ENCODE measurements at regions of chr6 and their contacts with region 1.

Region 1: GRCh38 chr6:90285611-90286381 is 10.8 kb downstream of the BACH2 start:
- DNase-seq: peak; percentile 94 to 97
- ATAC-seq: peak; percentile 89 to 96
- H3K4me3 ChIP-seq: peak overlapping the region; percentile 27 to 49 (median 43)
- H3K27ac ChIP-seq: peak overlapping the region; percentile 75 to 92 (median 84)
- H3K4me1 ChIP-seq: peaks cover 60 to 66% of the 10 kb centered on the region in 2 donors
- H3K27me3 ChIP-seq: no peaks in the 10 kb centered on the region
- CTCF ChIP-seq: no peak
- POLR2A ChIP-seq: peak in 1 of 2 donors; percentile 18

Region 2: GRCh38 chr6:89412071-89413005 is 873.5 kb before region 1 on chr6 and contains the start of gene RRAGD:
- in situ Hi-C with region 1: no loop called
- intact Hi-C with region 1: loop called (anchors 5 kb)
- DNase-seq: peak; percentile 82 to 91
- ATAC-seq: peak; percentile 85 to 91
- H3K4me3 ChIP-seq: peak within 1 kb of the TSS; percentile 89 to 97 (median 93)
- H3K27ac ChIP-seq: peak within 1 kb of the TSS; percentile 98 to 99 (median 99)
- H3K4me1 ChIP-seq: peaks cover 36 to 37% of the 10 kb centered on the region in 2 donors
- H3K27me3 ChIP-seq: no peaks in the 10 kb centered on the region
- CTCF ChIP-seq: peak in 3 of 5 experiments; percentile 20 to 47 (median 22)
- POLR2A ChIP-seq: peak; percentile 93 to 95
- total RNA-seq, gene RRAGD: 53.6 to 173 (median 106) TPM

Region 3: GRCh38 chr6:89970609-89971337 is 315.0 kb before region 1 on chr6:
- in situ Hi-C with region 1: loop called in 2 of 4 experiments (anchors 10 to 25 kb)
- intact Hi-C with region 1: no loop called
- DNase-seq: no peak
- ATAC-seq: peak; percentile 59 to 75
- H3K4me3 ChIP-seq: no peak overlapping the region
- H3K27ac ChIP-seq: peak overlapping the region in 1 of 4 donors; percentile 64
- H3K4me1 ChIP-seq: peaks cover 30 to 36% of the 10 kb centered on the region in 2 donors
- H3K27me3 ChIP-seq: no peaks in the 10 kb centered on the region
- CTCF ChIP-seq: peak; percentile 26 to 64 (median 44)
- POLR2A ChIP-seq: no peak

Region 4: GRCh38 chr6:90025523-90026061 is 260.2 kb before region 1 on chr6:
- in situ Hi-C with region 1: no loop called
- intact Hi-C with region 1: no loop called
- DNase-seq: peak in 1 of 2 donors; percentile 27
- ATAC-seq: peak; percentile 98 to 100
- H3K4me3 ChIP-seq: no peak overlapping the region
- H3K27ac ChIP-seq: peak overlapping the region; percentile 45 to 64 (median 54)
- H3K4me1 ChIP-seq: peaks cover 29 to 31% of the 10 kb centered on the region in 2 donors
- H3K27me3 ChIP-seq: no peaks in the 10 kb centered on the region
- CTCF ChIP-seq: no peak
- POLR2A ChIP-seq: no peak

Region 5: GRCh38 chr6:90216072-90216977 is 69.5 kb before region 1 on chr6:
- in situ Hi-C with region 1: no loop called
- intact Hi-C with region 1: loop called (anchors 1 kb)
- DNase-seq: peak in 1 of 2 donors; percentile 36
- ATAC-seq: no peak
- H3K4me3 ChIP-seq: no peak overlapping the region
- H3K27ac ChIP-seq: peak overlapping the region; percentile 86 to 96 (median 93)
- H3K4me1 ChIP-seq: peaks cover 46 to 73% of the 10 kb centered on the region in 2 donors
- H3K27me3 ChIP-seq: no peaks in the 10 kb centered on the region
- CTCF ChIP-seq: no peak
- POLR2A ChIP-seq: no peak

Region 6: GRCh38 chr6:90369024-90369519 is 83.3 kb after region 1 on chr6:
- in situ Hi-C with region 1: loop called in 1 of 4 experiments (anchors 5 kb)
- intact Hi-C with region 1: no loop called
- DNase-seq: peak; percentile 69
- ATAC-seq: peak; percentile 99 to 100
- H3K4me3 ChIP-seq: no peak overlapping the region
- H3K27ac ChIP-seq: peak overlapping the region; percentile 55 to 81 (median 62)
- H3K4me1 ChIP-seq: peaks cover 8 to 13% of the 10 kb centered on the region in 2 donors
- H3K27me3 ChIP-seq: no peaks in the 10 kb centered on the region
- CTCF ChIP-seq: no peak
- POLR2A ChIP-seq: no peak

Region 7: GRCh38 chr6:90393232-90393884 is 107.6 kb after region 1 on chr6:
- in situ Hi-C with region 1: no loop called
- intact Hi-C with region 1: loop called (anchors 5 kb)
- DNase-seq: peak; percentile 28 to 42
- ATAC-seq: peak; percentile 75 to 95
- H3K4me3 ChIP-seq: no peak overlapping the region
- H3K27ac ChIP-seq: no peak overlapping the region
- H3K4me1 ChIP-seq: no peaks in the 10 kb centered on the region
- H3K27me3 ChIP-seq: no peaks in the 10 kb centered on the region
- CTCF ChIP-seq: peak; percentile 70 to 85 (median 79)
- POLR2A ChIP-seq: no peak

Measured in gastrocnemius medialis (tissue), 4 donors.